ENCODE measurements at regions of chr4 and their contacts with region 1.

Region 1: DNA sequence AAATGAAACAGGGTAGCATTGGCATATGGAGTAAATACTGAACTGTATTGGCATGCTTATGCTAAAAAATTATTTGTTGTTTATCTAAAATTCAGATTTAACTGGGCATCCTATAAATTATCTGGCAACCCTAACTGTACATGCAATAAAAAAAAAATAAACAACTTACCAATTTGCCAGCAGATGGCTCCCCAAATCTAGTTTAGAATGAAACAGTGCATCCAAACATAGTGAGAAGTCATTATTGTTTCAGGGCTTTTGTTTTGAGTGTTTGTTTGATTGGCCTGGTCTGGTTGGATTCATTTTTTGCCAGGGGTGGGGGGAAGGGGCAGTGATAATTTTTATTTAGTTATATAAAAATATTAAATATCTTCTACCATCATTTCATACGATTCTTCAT is 12.8 kb upstream of the NSUN7 start:
- DNase-seq: peak; percentile 65
- H3K4me3 Mint-ChIP-seq: no peak overlapping the region
- H3K27ac Mint-ChIP-seq: no peak overlapping the region
- H3K4me1 Mint-ChIP-seq: peaks cover 18% of the 10 kb centered on the region
- H3K27me3 Mint-ChIP-seq: peaks cover 8% of the 10 kb centered on the region

Region 2: DNA sequence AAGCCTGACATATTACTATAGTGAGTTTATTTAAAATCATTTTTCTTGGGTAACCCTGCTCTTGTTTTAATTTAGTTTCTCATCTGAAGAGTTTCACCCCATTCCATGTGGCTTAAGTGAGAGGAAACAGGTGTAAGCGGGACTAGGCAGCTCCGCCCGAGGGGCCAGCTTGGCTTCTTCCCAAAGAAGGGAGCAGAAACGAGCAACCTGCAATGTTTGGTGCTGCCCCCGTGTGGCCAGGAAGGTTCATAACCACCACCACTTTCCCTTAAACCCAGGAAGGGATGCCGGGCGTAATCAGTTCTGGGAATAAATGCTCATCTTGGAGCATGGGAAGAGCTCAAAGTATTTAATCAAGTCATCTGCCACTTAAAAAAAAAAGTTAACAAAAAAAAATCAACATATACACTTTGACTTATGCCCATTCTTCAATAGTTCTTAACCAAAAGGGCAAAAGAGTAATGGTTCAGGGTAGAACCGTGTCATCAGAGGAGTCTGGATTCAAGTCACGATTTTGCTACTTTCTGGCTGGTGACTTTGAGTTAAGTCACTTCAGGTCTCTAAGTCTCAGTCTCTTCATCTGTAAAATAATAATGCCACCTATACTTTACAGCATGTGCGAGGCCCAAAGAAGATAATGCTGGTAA is 160.8 kb after region 1 on chr4:
- intact Hi-C with region 1: loop called (anchors 2 kb)
- DNase-seq: peak; percentile 87
- H3K4me3 Mint-ChIP-seq: peak overlapping the region; percentile 76
- H3K27ac Mint-ChIP-seq: peak overlapping the region; percentile 68
- H3K4me1 Mint-ChIP-seq: peaks cover 4% of the 10 kb centered on the region
- H3K27me3 Mint-ChIP-seq: peaks cover 5% of the 10 kb centered on the region

Region 3: GRCh38 chr4:40924096-40924792 is 187.3 kb after region 1 on chr4:
- intact Hi-C with region 1: loop called (anchors 1 kb)
- DNase-seq: peak; percentile 91
- H3K4me3 Mint-ChIP-seq: no peak overlapping the region
- H3K27ac Mint-ChIP-seq: peak overlapping the region; percentile 86
- H3K4me1 Mint-ChIP-seq: peaks cover 12% of the 10 kb centered on the region
- H3K27me3 Mint-ChIP-seq: peaks cover 24% of the 10 kb centered on the region

Region 4: DNA sequence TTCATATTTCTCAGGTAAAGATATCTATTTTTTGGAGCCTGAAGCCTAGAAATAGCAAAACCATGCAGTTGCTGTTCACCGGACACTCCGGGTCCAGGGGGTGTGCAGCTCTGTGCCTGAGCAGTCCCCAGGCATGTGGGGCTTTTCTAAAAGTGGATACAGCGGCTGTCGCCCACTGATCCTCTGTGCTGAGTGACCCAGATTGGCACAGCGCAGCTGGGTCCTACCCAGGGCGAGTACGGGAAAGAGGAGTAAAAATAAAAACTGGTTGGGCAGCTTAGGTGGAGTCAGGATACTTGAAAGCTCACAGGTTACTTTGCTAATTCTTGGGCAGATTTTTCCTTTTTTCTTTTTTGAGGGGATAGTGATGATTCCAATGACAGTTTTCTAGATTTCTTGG is 638.7 kb after region 1 on chr4:
- intact Hi-C with region 1: no loop called
- DNase-seq: no peak
- H3K4me3 Mint-ChIP-seq: no peak overlapping the region
- H3K27ac Mint-ChIP-seq: no peak overlapping the region
- H3K4me1 Mint-ChIP-seq: no peaks in the 10 kb centered on the region
- H3K27me3 Mint-ChIP-seq: no peaks in the 10 kb centered on the region